ENCODE measurements at regions of chr18 and their contacts with region 1.

Region 1: GRCh38 chr18:2655178-2655953 is at the start of gene SMCHD1:
- DNase-seq: peak; percentile 93
- H3K4me3 ChIP-seq: peak within 1 kb of the TSS; percentile 71 to 97 (median 94)
- H3K27ac ChIP-seq: peak within 1 kb of the TSS; percentile 95 to 99 (median 98)
- H3K4me1 ChIP-seq: peaks cover 0 to 37% (median 29%) of the 10 kb centered on the region in 4 donors
- H3K27me3 ChIP-seq: no peaks in the 10 kb centered on the region
- CTCF ChIP-seq: no peak
- EP300 ChIP-seq: no peak
- POLR2A ChIP-seq: peak; percentile 45 to 82
- total RNA-seq, gene SMCHD1: 69.9 to 101 (median 82.4) TPM

Region 2: GRCh38 chr18:2571200-2572143 is 83.9 kb before region 1 on chr18 and contains the starts of genes METTL4 and NDC80:
- intact Hi-C with region 1: loop called (anchors 1 kb)
- DNase-seq: peak; percentile 88
- H3K4me3 ChIP-seq: peak within 1 kb of the TSS; percentile 65 to 70 (median 67)
- H3K27ac ChIP-seq: peak within 1 kb of the TSS; percentile 93 to 96 (median 94)
- H3K4me1 ChIP-seq: peaks cover 0 to 23% (median 18%) of the 10 kb centered on the region in 4 donors
- H3K27me3 ChIP-seq: peaks cover 0 to 4% (median 0%) of the 10 kb centered on the region in 3 donors
- CTCF ChIP-seq: no peak
- EP300 ChIP-seq: no peak
- POLR2A ChIP-seq: peak in 1 of 2 donors; percentile 55
- total RNA-seq, gene METTL4: 5.4 to 8.9 (median 6.7) TPM
- total RNA-seq, gene NDC80: 0.36 to 0.41 TPM in 2 of 4 donors, not detected in the others

Region 3: GRCh38 chr18:2589345-2590068 is 65.9 kb before region 1 on chr18:
- intact Hi-C with region 1: no loop called
- DNase-seq: no peak
- H3K4me3 ChIP-seq: no peak overlapping the region
- H3K27ac ChIP-seq: no peak overlapping the region
- H3K4me1 ChIP-seq: no peaks in the 10 kb centered on the region
- H3K27me3 ChIP-seq: no peaks in the 10 kb centered on the region
- CTCF ChIP-seq: no peak
- EP300 ChIP-seq: no peak
- POLR2A ChIP-seq: no peak

Region 4: DNA sequence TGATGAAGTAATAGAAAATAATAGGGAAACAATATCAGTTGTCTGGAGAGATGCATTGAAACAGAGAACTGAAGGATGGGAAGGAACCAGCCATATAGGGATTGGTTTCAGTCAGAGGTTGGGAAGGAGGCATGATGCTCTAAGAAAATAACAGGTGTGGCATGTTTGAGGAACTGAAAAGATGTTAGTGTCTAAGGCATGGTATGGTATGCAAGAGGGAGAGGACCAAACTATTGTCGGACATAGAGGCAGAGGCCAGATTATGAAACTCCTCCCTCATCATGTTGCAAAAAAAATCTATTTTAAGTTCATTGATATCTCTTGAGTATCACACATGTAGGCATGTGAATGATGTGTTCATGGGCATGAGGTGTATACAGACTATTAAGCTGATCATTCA is 142.6 kb after region 1 on chr18:
- intact Hi-C with region 1: no loop called
- DNase-seq: no peak
- H3K4me3 ChIP-seq: no peak overlapping the region
- H3K27ac ChIP-seq: no peak overlapping the region
- H3K4me1 ChIP-seq: no peaks in the 10 kb centered on the region
- H3K27me3 ChIP-seq: no peaks in the 10 kb centered on the region
- CTCF ChIP-seq: no peak
- EP300 ChIP-seq: no peak
- POLR2A ChIP-seq: no peak

Measured in sigmoid colon (tissue), 7 donors.